Activated CD8-positive, alpha-beta T cell treated with anti-CD3 and anti-CD28 coated beads for 36 hours (primary cell): ENCODE measurements at regions of chr11 and their contacts with region 1.

Region 1: GRCh38 chr11:77121096-77121640 is 6.9 kb upstream of the MYO7A start:
- DNase-seq: no peak
- ATAC-seq: no peak
- H3K4me3 Mint-ChIP-seq: no peak overlapping the region
- H3K27ac Mint-ChIP-seq: no peak overlapping the region
- H3K4me1 Mint-ChIP-seq: no peaks in the 10 kb centered on the region
- H3K27me3 Mint-ChIP-seq: no peaks in the 10 kb centered on the region
- CTCF ChIP-seq: no peak

Region 2: DNA sequence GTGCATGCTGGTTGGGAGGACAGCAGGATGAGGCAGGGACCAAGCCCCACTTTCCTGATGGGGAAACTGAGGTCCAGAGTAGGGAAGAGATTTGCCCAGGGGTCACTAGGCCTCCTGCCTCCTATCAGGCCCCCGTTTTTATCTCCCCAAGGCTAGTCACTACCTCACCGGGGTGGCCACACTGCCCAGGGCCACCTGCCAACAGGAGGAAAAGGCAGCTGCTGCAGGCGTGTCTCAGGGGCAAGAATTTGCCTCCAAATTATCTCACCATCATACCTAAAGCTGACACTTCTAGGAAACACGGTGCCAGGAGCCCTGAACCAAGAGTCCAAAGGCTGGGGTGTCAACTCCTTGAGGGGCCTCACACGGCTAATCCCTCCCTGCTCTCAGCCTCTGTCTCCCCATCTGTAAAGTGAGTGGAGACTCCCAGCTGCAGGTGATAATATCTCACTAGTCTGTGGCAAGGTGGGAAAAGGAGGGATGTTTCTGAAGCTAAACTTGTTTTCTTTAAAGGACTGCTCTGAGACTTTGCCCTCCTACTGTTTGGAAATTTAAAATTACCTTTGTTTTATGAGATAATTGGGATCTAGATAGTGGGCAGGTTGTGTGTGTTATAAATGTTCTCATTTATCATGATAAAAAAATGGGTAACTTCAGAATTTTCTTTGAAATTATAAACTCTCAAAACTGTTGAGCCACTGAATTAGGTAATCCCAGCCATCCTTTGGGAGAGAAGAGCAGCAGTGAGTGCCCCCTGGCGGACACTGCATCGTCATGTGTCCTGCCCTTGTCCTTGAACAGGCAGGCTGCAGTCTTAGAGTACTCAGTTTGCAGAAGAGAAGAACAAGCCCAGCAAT is 66.8 kb after region 1 on chr11:
- CTCF ChIA-PET with region 1: interaction called, 176 read pairs
- POLR2A ChIA-PET with region 1: no interaction called
- intact Hi-C with region 1: no loop called
- DNase-seq: peak; percentile 89
- ATAC-seq: peak; percentile 77
- H3K4me3 Mint-ChIP-seq: no peak overlapping the region
- H3K27ac Mint-ChIP-seq: no peak overlapping the region
- H3K4me1 Mint-ChIP-seq: no peaks in the 10 kb centered on the region
- H3K27me3 Mint-ChIP-seq: no peaks in the 10 kb centered on the region
- CTCF ChIP-seq: peak; percentile 86

Region 3: GRCh38 chr11:77203901-77204755 is 83.0 kb after region 1 on chr11:
- CTCF ChIA-PET with region 1: no interaction called
- POLR2A ChIA-PET with region 1: no interaction called
- intact Hi-C with region 1: no loop called
- DNase-seq: no peak
- ATAC-seq: no peak
- H3K4me3 Mint-ChIP-seq: no peak overlapping the region
- H3K27ac Mint-ChIP-seq: no peak overlapping the region
- H3K4me1 Mint-ChIP-seq: no peaks in the 10 kb centered on the region
- H3K27me3 Mint-ChIP-seq: no peaks in the 10 kb centered on the region
- CTCF ChIP-seq: no peak